WTC11 (cell line): ENCODE measurements at regions of chr11 and their contacts with region 1.

Region 1: DNA sequence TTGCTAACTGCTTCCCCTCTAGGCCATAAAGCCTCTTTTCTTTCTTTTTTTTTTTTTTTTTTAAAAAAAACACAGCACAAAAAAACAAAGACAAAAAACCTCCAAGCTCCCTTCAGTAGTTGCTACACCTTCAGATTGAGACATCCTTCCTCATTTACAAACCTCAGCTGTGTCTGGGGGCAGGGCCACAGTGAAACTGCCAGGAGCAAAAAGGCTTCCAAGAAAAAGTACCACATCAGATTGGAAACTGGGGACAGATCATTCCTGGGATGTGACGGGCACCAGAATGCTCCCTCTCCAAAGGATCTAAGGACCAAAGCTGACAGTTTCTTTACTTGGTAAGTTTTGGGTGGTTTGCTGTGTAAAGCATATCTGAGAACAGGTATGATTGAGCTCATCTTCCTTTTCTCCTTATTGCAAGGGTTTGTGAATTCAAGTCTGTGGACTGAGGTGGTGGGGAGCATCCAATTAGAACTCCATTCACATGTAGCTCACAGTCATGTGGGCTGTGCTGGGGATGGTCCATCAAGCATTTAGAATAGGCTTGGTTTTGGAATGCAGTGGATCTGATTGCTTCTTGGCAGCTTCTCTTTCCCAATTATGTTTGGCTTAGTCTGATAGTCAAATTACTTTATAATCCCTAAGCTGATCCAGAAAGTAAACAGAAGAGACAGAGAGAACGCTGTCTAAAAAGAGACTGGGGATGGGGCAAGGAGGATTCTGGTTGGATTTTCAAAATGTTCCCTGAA is 700 bp downstream of the BBOX1 start:
- DNase-seq: no peak
- ATAC-seq: peak; percentile 27; the same call in 1 of the 2 replicates
- H3K4me3 Mint-ChIP-seq: no peak overlapping the region
- H3K27ac Mint-ChIP-seq: no peak overlapping the region
- H3K4me1 Mint-ChIP-seq: peaks cover 16% of the 10 kb centered on the region
- H3K27me3 Mint-ChIP-seq: no peaks in the 10 kb centered on the region
- CTCF ChIP-seq: no peak

Region 2: DNA sequence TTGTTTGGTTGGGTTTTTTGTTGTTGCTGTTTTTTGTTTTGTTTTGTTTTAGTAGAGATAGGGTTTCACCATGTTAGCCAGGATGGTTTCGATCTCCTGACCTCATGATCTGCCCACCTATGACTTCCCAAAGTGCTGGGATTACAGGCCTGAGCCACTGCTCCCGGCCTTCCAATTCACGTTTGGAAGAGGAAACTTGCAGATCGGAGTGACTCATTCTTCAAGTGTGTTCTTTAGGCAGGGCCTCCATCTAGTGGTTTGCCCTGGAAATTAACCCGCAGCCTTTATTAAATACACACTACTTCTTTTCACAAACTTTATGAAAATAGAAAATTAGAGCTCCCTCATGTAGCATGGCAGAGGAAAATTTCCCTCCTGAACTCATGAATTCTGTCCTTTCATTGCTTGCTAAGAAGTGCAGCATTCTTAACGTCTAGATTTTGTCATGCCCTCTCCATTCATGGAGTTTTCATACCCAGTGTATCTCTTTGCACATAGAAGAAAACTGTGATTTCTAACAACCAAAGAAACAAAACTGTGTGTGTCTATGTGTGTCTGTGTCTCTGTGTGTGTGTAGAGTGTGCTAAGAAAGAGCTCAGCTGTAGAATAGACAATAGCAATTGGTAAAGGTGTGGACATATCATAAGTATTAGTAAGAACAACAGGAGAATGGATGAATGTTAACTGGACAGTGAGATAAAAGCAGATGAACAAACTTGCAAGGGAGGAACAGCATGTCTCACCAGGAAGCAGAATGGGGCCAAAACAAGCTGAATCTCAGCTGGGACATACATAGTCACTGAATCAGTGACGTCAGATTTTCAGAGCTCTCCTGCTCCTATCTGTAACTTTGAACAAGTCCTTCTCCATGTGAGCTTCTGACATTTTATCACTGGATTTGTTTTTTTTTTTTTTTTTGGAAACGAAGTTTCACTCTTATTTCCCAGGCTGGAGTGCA is 117.7 kb after region 1 on chr11:
- CTCF ChIA-PET with region 1: interaction called, 10 read pairs
- POLR2A ChIA-PET with region 1: no interaction called
- DNase-seq: peak; percentile 47
- ATAC-seq: peak; percentile 86
- H3K4me3 Mint-ChIP-seq: no peak overlapping the region
- H3K27ac Mint-ChIP-seq: no peak overlapping the region
- H3K4me1 Mint-ChIP-seq: peaks cover 5% of the 10 kb centered on the region; the same call in 1 of the 2 replicates
- H3K27me3 Mint-ChIP-seq: no peaks in the 10 kb centered on the region; the same call in 1 of the 2 replicates
- CTCF ChIP-seq: peak; percentile 60

Region 3: GRCh38 chr11:27241311-27242122 is 200.2 kb after region 1 on chr11:
- CTCF ChIA-PET with region 1: no interaction called
- POLR2A ChIA-PET with region 1: no interaction called
- DNase-seq: no peak
- ATAC-seq: no peak
- H3K4me3 Mint-ChIP-seq: no peak overlapping the region
- H3K27ac Mint-ChIP-seq: no peak overlapping the region
- H3K4me1 Mint-ChIP-seq: peaks cover 14% of the 10 kb centered on the region
- H3K27me3 Mint-ChIP-seq: no peaks in the 10 kb centered on the region; the same call in 1 of the 2 replicates
- CTCF ChIP-seq: no peak